Activated CD4-positive, alpha-beta T cell treated with anti-CD3 and anti-CD28 coated beads for 36 hours (primary cell): ENCODE measurements at regions of chr1 and their contacts with region 1.

Region 1: GRCh38 chr1:222455188-222455879 is 92.6 kb downstream of the HHIPL2 start:
- DNase-seq: peak; percentile 91
- ATAC-seq: peak; percentile 99
- H3K4me3 Mint-ChIP-seq: no peak overlapping the region
- H3K27ac Mint-ChIP-seq: peak overlapping the region; percentile 21
- H3K4me1 Mint-ChIP-seq: peaks cover 16% of the 10 kb centered on the region
- H3K27me3 Mint-ChIP-seq: no peaks in the 10 kb centered on the region

Region 2: DNA sequence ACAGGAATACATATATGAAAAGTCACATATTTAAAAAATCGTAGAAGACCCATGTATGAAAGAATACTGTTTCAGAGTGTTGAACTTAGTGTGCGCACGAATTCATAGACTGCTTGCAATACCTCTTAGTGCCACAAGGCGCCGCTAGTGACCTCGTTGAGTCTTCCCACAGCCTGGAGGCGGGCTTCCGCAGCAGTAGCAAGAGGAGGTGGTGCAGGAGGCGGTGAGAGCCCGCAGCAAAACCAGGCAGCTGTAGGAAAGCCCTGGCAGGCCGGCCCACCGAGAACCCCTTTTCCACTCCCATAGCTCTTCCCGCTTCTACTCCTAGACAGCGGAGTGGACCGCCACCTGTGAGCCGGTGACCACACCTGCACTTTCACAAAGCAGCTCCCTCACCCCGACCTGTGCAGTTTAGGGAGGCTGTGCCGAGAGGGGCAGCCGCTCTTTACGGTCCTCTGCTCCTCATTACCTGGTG is 1645.1 kb before region 1 on chr1:
- CTCF ChIA-PET with region 1: no interaction called
- POLR2A ChIA-PET with region 1: no interaction called
- intact Hi-C with region 1: loop called in 1 of 2 experiments (anchors 5 kb)
- DNase-seq: peak; percentile 86
- ATAC-seq: peak; percentile 94
- H3K4me3 Mint-ChIP-seq: peak overlapping the region; percentile 27
- H3K27ac Mint-ChIP-seq: no peak overlapping the region
- H3K4me1 Mint-ChIP-seq: peaks cover 6% of the 10 kb centered on the region
- H3K27me3 Mint-ChIP-seq: peaks cover 16% of the 10 kb centered on the region

Region 3: DNA sequence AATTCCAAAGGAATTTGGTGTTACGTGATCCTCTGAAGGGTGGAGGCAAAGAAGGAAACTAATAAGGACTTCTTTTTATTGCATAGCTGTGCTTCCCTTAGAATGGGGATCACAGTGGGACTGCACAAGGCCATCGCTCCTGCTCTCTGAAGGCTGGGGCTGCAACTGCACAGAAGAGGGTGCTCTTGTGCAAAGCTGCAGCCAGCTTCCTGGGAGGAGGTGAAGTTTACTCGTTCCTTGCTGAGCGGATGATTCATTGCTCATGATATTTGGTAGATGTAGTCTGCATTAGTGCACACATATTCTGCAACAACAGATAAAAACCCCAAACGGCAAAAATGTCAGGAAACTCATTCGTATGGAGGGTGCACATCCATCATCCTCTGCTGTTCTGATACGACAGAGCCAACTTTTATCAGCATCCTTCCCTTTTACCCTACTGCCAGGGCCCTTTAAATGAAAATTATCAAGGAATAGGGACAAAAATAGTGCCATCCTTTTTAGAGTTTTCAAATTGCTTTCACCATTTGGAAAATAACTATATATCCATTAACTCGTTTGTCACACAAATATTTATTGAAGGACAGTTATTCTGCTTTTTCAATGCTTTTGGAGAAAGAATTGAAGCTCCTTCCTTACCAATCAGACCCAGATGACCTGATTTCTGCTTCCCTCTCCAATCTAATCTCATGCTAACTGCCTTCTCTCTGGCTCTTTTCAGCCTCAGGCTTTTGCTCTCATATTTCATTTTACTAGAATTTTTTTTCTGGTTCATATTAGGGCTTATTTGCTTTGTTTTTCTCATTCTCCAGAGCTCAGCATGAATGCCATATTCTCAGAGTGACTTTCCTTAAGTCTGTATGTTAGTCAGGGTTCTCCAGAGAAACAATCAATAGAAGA is 977.0 kb before region 1 on chr1:
- CTCF ChIA-PET with region 1: interaction called, 18 read pairs
- POLR2A ChIA-PET with region 1: no interaction called
- intact Hi-C with region 1: loop called (anchors 1 kb)
- DNase-seq: peak; percentile 78
- ATAC-seq: peak; percentile 99
- H3K4me3 Mint-ChIP-seq: no peak overlapping the region
- H3K27ac Mint-ChIP-seq: no peak overlapping the region
- H3K4me1 Mint-ChIP-seq: no peaks in the 10 kb centered on the region
- H3K27me3 Mint-ChIP-seq: peaks cover 7% of the 10 kb centered on the region

Region 4: DNA sequence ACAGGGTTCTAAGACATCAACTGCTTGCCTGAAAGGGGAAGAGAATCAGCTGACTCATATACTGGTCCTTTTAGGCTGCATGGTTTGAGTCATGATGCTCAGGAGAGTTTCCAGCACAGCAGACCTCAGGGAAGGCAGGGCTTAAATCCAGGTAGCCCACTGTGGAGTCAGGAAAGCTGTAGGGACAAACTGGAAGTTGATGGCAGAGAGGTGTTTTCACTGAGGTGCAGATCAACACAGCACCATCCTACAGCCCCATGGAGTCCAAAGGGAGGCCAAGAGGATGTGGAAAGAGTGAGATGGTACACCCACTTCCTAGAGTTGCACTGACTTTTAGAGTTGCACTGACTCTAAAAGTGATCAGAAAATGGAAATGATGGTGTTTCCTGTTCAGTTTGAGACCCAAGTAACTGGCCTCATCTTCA is 461.0 kb before region 1 on chr1:
- CTCF ChIA-PET with region 1: no interaction called
- POLR2A ChIA-PET with region 1: no interaction called
- intact Hi-C with region 1: loop called in 1 of 2 experiments (anchors 10 kb)
- DNase-seq: peak; percentile 50
- ATAC-seq: peak; percentile 81
- H3K4me3 Mint-ChIP-seq: no peak overlapping the region
- H3K27ac Mint-ChIP-seq: peak overlapping the region; percentile 89
- H3K4me1 Mint-ChIP-seq: peaks cover 32% of the 10 kb centered on the region
- H3K27me3 Mint-ChIP-seq: no peaks in the 10 kb centered on the region

Region 5: GRCh38 chr1:222171005-222171404 is 284.3 kb before region 1 on chr1:
- CTCF ChIA-PET with region 1: interaction called, 7 read pairs
- POLR2A ChIA-PET with region 1: no interaction called
- intact Hi-C with region 1: loop called in 1 of 2 experiments (anchors 5 kb)
- DNase-seq: no peak
- ATAC-seq: no peak
- H3K4me3 Mint-ChIP-seq: no peak overlapping the region
- H3K27ac Mint-ChIP-seq: no peak overlapping the region
- H3K4me1 Mint-ChIP-seq: no peaks in the 10 kb centered on the region
- H3K27me3 Mint-ChIP-seq: no peaks in the 10 kb centered on the region

Region 6: GRCh38 chr1:222441066-222441465 is 14.3 kb before region 1 on chr1:
- CTCF ChIA-PET with region 1: interaction called, 15 read pairs
- POLR2A ChIA-PET with region 1: no interaction called
- intact Hi-C with region 1: no loop called
- DNase-seq: no peak
- ATAC-seq: no peak
- H3K4me3 Mint-ChIP-seq: no peak overlapping the region
- H3K27ac Mint-ChIP-seq: no peak overlapping the region
- H3K4me1 Mint-ChIP-seq: peaks cover 12% of the 10 kb centered on the region
- H3K27me3 Mint-ChIP-seq: no peaks in the 10 kb centered on the region

Region 7: DNA sequence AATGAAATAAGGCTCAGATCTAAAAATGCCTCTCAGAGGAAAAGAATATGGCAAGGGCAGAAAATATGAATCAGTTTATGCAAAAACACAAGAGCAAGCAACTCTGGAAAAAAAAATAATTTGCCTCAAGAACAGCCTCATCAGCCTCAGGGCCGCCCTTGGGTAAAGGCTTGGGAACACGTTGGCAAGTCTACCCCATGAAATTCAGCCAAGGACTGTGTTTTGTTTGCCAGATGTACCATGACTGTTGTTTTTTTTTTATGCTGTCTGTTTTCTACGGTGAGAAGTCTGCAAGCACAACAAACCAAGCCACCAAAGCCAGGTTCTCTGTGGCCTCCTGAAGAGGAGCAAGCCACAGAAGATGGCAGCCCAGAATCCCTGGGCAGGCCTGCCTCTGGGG is 74.6 kb after region 1 on chr1:
- CTCF ChIA-PET with region 1: no interaction called
- POLR2A ChIA-PET with region 1: no interaction called
- intact Hi-C with region 1: no loop called
- DNase-seq: no peak
- ATAC-seq: no peak
- H3K4me3 Mint-ChIP-seq: no peak overlapping the region
- H3K27ac Mint-ChIP-seq: no peak overlapping the region
- H3K4me1 Mint-ChIP-seq: no peaks in the 10 kb centered on the region
- H3K27me3 Mint-ChIP-seq: peaks cover 14% of the 10 kb centered on the region